Activated CD4-positive, alpha-beta T cell treated with anti-CD3 and anti-CD28 coated beads, Interleukin-2, amount 10 ng/mL, durations not matched to agents 24 days and 14 days (primary cell): ENCODE measurements at regions of chr2 and their contacts with region 1.

Region 1: GRCh38 chr2:207769597-207770486 is at the start of gene FZD5:
- DNase-seq: peak; percentile 94
- H3K4me3 Mint-ChIP-seq: peak within 1 kb of the TSS; percentile 89
- H3K27ac Mint-ChIP-seq: peak within 1 kb of the TSS; percentile 41
- H3K4me1 Mint-ChIP-seq: peaks cover 23% of the 10 kb centered on the region
- H3K27me3 Mint-ChIP-seq: peaks cover 61% of the 10 kb centered on the region
- total RNA-seq, gene FZD5: 0.75 and 1.1 TPM in 2 replicates

Region 2: DNA sequence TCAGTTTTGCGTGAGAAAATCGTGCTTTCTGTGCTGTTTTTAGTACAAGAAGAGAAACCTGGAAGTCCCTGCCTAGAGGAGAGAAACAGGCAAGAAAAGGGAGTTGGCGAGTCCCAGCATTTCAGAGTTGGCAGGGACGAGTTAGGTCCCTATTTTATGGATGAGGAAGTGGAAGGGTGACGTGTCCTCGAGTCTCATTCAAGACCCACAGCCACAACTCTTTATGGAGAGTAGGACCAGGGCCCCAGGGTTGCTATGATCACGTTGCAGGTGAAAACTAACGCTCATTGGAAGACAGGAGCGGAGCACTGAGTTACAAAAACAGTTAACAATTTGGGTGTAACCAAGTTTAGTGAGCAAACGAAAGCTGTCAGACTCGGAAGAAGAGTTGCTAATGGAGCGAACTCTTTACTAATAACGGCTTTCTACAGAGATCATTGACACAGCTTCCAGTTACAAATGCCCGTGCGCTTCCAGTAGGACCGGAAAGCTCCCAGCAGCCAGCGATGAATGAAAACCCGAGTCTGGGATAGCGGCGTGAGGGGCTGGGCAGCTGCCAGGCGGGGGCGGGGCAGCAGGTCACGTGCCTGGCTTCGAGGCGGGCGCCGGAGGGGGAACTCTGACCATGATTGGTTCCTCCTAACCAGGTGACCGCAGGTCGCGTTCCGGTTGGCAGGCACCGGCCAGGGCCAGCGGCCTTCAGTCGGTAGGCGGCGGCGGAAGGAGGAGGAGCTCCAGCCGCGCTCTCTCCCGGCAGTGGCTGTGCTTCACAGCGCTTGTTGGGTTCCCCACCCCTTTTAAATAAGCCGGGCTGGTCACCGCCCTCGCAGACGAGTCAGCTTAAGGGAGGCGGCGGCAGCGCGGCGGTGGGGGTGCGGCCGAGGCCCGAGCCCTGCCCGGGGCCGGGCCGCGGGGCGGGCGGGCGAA is 58.8 kb before region 1 on chr2 and contains the start of gene CCNYL1:
- intact Hi-C with region 1: loop called (anchors 1 kb)
- DNase-seq: peak; percentile 99
- H3K4me3 Mint-ChIP-seq: peak within 1 kb of the TSS; percentile 100
- H3K27ac Mint-ChIP-seq: peak within 1 kb of the TSS; percentile 88
- H3K4me1 Mint-ChIP-seq: peaks cover 23% of the 10 kb centered on the region
- H3K27me3 Mint-ChIP-seq: no peaks in the 10 kb centered on the region
- total RNA-seq, gene CCNYL1: 6.1 and 8.7 TPM in 2 replicates

Region 3: DNA sequence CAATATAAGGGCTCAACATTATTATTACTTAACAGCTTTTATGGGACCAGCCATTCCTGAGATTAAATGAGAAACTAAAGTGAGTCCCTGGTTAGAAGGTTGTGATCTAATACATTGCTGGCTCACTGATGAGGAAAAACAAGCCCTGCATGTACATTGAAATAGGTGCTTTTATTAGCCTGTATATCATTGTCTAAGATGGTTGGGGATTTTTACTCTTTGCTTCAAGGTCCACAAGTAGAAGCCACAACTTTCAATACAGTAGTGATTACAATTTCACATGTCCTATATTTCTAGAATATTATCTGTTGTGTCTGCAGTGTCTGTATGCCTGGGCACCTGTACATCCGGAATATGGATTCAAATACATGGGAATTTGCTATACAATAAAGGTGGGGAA is 104.0 kb after region 1 on chr2:
- intact Hi-C with region 1: no loop called
- DNase-seq: no peak
- H3K4me3 Mint-ChIP-seq: no peak overlapping the region
- H3K27ac Mint-ChIP-seq: no peak overlapping the region
- H3K4me1 Mint-ChIP-seq: no peaks in the 10 kb centered on the region
- H3K27me3 Mint-ChIP-seq: peaks cover 2% of the 10 kb centered on the region

Region 4: DNA sequence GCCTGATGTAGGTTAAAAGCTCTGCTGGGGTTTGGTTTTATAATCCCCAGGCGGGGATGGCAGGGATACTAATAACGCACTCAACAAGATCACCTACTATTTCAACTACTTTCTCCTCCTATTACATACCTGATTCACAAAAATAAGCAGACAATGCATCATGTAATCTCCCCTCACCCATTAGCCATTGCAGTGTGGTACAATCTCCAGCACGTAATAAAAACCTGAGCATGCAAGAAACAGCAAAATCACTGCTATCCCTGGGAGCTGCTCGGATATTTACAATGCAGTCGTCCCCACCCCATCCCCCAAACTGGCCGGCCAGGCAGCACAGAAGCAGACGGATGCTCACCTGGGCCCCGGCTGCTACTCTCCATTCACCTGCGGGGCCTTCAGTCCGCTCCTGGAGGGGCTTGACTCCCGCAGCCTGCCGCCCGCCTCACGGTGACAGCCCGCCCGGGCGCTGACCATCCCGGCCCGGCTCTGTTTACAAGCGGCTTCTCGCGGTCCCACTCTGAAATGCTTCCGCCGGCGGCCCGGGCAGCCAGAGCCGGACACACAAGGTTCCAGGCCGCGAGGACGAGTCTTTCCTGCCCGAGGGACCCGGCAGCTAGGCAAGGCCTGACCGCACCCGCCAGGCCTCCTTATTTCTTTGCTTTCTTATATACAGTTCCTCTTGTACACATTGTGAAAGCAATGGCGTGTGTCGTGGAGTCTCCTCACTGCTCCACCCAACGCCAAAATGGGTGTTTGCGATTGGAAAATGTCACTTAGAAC is 255.4 kb after region 1 on chr2 and contains the start of gene PLEKHM3:
- intact Hi-C with region 1: loop called (anchors 2 kb)
- DNase-seq: peak; percentile 94
- H3K4me3 Mint-ChIP-seq: peak within 1 kb of the TSS; percentile 93
- H3K27ac Mint-ChIP-seq: peak within 1 kb of the TSS; percentile 84
- H3K4me1 Mint-ChIP-seq: peaks cover 10% of the 10 kb centered on the region
- H3K27me3 Mint-ChIP-seq: no peaks in the 10 kb centered on the region
- total RNA-seq, gene PLEKHM3: 5.8 and 6.6 TPM in 2 replicates